ENCODE measurements at regions of chr2 and their contacts with region 1.

Region 1: DNA sequence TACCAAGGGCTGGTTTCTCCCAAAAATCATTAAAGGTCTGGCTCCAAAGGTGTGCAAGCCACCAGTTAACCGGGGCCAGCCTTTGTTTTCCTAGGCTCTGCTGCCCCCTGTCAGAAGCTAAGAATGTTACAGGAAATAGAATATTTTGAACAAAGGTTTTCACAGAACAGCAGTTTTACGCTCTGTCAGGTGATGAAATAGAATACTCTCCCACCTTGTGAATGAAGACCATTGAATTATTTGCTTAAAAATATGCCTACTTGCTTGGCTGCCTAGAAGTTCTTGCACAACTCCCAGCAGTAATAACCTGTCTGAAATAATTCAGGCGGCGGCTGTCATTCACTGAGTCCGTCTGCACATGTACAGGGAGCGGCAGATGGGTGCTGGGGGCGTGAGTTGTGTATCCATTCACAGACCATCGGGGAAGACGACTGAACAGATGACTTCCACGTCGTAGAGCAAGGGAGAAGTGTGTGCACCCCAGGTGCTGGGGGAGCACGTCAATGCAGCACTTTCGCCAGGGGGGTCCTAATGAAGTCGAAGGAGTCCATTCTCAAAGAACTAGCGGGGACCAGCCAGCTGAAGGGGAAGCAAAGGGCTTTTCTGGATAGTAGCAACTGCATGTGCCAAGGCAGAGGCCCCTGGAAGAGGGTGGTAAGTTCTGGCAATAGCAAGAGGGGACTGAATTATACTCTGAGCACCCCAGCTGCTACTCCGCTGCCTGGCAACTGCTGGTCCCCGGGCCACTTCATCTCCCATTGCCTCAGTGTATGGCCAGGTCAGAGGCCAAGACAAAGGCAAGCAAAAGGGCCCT is 56.1 kb downstream of the SF3B1 start:
- DNase-seq: peak; percentile 41
- H3K4me3 Mint-ChIP-seq: no peak overlapping the region
- H3K27ac Mint-ChIP-seq: peak overlapping the region; percentile 0
- H3K4me1 Mint-ChIP-seq: peaks cover 18% of the 10 kb centered on the region
- H3K27me3 Mint-ChIP-seq: peaks cover 3% of the 10 kb centered on the region

Region 2: DNA sequence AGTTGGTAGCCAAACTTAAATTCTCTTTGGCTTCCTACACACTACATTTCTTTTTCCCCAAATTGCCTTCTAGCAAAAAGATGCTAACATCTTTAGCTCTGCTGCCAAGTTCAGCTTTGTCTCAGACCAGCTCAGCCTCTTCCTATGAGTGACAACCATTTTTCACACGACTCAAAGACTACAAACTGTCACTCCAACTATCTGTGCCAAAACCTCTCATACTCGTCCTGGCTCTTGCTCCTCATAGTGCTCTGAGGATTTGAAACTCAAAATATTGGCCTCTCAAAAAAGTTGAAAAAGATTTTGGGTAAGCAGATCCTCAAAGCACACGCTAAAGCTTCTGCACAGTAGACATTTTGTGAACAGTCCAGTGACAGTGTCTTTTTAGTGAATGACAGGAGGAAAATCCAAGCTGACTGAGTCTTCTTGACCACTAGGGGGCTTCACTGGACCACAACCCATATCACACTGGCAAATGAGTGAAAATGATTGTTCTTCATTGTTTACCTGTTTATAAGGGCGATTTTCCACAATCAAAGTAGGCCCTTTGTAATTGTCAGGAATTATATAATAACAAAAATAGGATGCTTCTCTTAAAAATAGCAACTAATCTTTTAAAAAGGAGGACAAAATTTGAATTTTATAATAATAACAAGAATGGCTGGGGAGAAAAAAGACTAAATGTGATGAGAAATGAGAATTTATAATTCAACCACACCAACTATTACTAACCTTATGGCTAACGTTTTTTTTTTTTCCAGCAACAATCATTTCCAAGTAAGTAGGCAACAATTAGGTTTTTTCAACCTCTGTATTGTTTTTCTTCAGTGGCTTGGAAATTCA is 366.7 kb before region 1 on chr2:
- intact Hi-C with region 1: loop called (anchors 1 kb)
- DNase-seq: no peak
- H3K4me3 Mint-ChIP-seq: no peak overlapping the region
- H3K27ac Mint-ChIP-seq: peak overlapping the region; percentile 80
- H3K4me1 Mint-ChIP-seq: peaks cover 5% of the 10 kb centered on the region
- H3K27me3 Mint-ChIP-seq: no peaks in the 10 kb centered on the region

Region 3: GRCh38 chr2:197113275-197113711 is 265.4 kb before region 1 on chr2:
- intact Hi-C with region 1: loop called (anchors 2 kb)
- DNase-seq: no peak
- H3K4me3 Mint-ChIP-seq: no peak overlapping the region
- H3K27ac Mint-ChIP-seq: no peak overlapping the region
- H3K4me1 Mint-ChIP-seq: peaks cover 27% of the 10 kb centered on the region
- H3K27me3 Mint-ChIP-seq: no peaks in the 10 kb centered on the region

Region 4: DNA sequence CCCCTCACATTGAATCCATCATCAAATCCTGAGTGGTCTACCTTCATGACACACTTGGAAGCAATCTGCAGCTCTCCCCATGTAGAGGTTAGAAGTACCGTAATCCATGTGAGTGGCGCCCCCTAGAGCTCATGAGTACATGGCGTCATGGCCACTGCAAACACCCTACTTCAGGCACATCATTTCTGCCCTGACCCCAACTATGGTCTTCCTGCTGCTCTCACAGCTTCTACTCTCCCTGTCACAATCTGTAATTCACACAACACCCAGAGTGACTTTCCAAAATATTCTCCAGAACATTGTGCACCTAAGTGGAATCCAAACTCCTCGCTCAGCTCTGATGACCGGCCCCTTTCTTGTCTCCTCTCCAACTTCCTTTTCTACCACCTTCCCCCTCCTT is 210.0 kb before region 1 on chr2:
- intact Hi-C with region 1: loop called (anchors 5 kb)
- DNase-seq: peak; percentile 46
- H3K4me3 Mint-ChIP-seq: no peak overlapping the region
- H3K27ac Mint-ChIP-seq: peak overlapping the region; percentile 67
- H3K4me1 Mint-ChIP-seq: peaks cover 31% of the 10 kb centered on the region
- H3K27me3 Mint-ChIP-seq: no peaks in the 10 kb centered on the region

Region 5: GRCh38 chr2:197191177-197191939 is 187.3 kb before region 1 on chr2:
- intact Hi-C with region 1: loop called (anchors 2 kb)
- DNase-seq: no peak
- H3K4me3 Mint-ChIP-seq: no peak overlapping the region
- H3K27ac Mint-ChIP-seq: peak overlapping the region; percentile 56
- H3K4me1 Mint-ChIP-seq: peaks cover 66% of the 10 kb centered on the region
- H3K27me3 Mint-ChIP-seq: no peaks in the 10 kb centered on the region